Ascending aorta (tissue), 2 donors: ENCODE measurements at regions of chr13 and their contacts with region 1.

Region 1: DNA sequence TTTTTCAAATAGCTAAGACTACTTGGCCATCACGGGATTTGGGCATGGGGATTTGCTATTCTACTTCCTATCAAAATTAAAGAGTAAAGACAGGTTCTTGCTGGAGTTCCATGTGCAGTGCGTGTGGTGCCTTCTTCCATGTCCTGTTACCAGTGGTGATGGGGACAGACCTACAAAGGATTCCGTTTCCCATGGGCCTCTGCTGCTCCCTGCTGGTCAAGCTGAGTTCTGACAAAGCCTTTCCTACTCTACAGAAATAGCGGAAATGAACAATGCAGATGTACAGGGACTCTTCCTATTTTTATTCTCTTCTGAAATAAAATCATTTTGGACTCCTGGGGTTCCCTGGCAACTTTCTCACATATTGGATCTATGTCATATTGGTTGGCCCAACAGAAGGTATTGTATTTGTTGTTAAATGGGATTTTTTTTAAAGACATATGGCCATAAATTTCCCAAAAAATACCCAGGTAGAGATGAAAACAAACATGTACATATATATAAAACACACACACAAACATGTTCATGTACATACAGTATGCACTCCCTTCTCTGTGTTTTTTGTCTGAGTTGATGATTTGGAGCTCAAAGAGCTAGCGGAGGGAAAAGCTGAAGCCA is 90.5 kb upstream of the SLC15A1 start:
- DNase-seq: no peak
- H3K4me3 ChIP-seq: no peak overlapping the region
- H3K27ac ChIP-seq: no peak overlapping the region
- H3K4me1 ChIP-seq: peaks cover 0 to 4% of the 10 kb centered on the region in 2 donors
- H3K27me3 ChIP-seq: no peaks in the 10 kb centered on the region
- CTCF ChIP-seq: peak; percentile 46 to 86 (median 81)

Region 2: DNA sequence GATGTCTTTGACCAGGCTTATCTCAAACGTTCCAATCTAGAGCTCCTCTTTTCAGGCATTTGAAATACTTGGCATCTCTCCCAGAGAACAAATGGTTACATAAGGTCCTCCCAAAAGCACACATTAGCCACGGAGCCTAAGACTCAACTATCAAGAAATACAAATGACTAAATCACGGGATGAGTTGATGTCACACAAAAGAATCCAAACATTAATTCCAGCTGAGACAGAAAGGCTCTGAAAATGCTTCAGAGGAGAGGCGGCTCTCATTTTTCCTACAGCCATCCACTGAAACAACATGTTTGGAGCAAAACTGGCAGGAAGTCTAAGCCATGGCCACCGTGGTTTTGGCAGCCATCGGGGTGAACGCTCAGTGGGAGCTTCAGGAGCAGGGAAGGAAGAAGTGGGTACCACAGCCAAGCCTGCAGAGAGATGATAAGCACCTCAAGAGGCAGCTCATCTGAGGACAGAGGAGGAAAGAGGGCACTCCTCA is 388.5 kb before region 1 on chr13:
- intact Hi-C with region 1: loop called (anchors 5 kb)
- DNase-seq: no peak
- H3K4me3 ChIP-seq: no peak overlapping the region
- H3K27ac ChIP-seq: peak overlapping the region; percentile 62 to 63
- H3K4me1 ChIP-seq: peaks cover 2 to 26% of the 10 kb centered on the region in 2 donors
- H3K27me3 ChIP-seq: no peaks in the 10 kb centered on the region
- CTCF ChIP-seq: no peak

Region 3: GRCh38 chr13:98576963-98577822 is 265.8 kb before region 1 on chr13 and contains the start of gene STK24:
- intact Hi-C with region 1: loop called (anchors 10 kb)
- DNase-seq: peak in 1 of 2 donors; percentile 77
- H3K4me3 ChIP-seq: peak within 1 kb of the TSS; percentile 88 to 89
- H3K27ac ChIP-seq: peak within 1 kb of the TSS; percentile 98 to 99
- H3K4me1 ChIP-seq: peaks cover 0 to 24% of the 10 kb centered on the region in 2 donors
- H3K27me3 ChIP-seq: no peaks in the 10 kb centered on the region
- CTCF ChIP-seq: no peak
- total RNA-seq, gene STK24: 35.4 TPM

Region 4: GRCh38 chr13:99033814-99034213 is 190.8 kb after region 1 on chr13:
- intact Hi-C with region 1: loop called (anchors 5 kb)
- DNase-seq: no peak
- H3K4me3 ChIP-seq: no peak overlapping the region
- H3K27ac ChIP-seq: no peak overlapping the region
- H3K4me1 ChIP-seq: no peaks in the 10 kb centered on the region
- H3K27me3 ChIP-seq: no peaks in the 10 kb centered on the region
- CTCF ChIP-seq: peak in 2 of 3 experiments; percentile 28 to 56

Region 5: DNA sequence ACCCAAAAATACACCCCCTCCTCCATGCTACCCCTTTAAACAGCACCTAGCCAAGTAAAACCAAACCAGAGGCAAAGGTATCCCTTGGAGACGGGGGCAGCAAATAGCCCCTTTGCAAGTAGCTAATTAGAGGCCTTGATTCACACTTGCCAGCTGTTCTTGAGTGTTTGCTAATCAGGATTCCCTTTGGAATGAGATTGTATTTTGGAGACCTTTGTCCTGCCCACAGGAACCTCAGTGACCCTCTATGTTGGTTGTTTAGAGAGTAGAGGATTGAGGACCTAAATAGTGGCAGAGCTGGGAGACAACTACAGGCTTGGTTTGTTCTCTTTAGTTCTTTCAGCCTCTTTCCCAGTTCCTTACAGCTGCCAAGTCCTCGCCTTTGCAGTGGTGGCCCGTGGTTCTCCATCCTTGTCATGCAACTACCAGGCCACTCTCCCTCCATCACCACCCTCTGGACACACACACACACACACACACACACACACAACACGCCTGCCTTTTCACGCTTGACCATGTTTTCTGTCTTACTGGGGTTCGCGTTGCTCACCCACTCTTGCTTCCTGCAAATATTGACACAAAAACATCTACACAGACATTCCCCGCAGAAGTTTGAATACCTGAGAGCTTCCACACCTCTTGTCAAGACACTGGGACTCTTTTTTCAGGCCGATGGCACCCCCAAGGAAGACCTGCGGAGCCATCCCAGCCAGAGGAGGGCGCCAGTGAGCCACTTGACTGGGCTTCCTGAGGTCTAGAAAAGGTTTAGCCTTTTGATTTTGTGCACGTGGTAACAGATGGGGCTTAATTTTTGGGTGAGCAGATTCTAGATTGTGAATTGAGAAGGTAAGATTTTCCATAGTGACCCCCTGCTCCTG is 544.2 kb after region 1 on chr13:
- intact Hi-C with region 1: no loop called
- DNase-seq: peak in 1 of 2 donors; percentile 74
- H3K4me3 ChIP-seq: no peak overlapping the region
- H3K27ac ChIP-seq: no peak overlapping the region
- H3K4me1 ChIP-seq: no peaks in the 10 kb centered on the region
- H3K27me3 ChIP-seq: no peaks in the 10 kb centered on the region
- CTCF ChIP-seq: peak; percentile 12 to 43 (median 41)